ENCODE measurements at regions of chr3 and their contacts with region 1.

Region 1: GRCh38 chr3:19937459-19938294 is 3.7 kb upstream of the EFHB start:
- DNase-seq: peak; percentile 37
- ATAC-seq: peak; percentile 92
- H3K4me3 Mint-ChIP-seq: no peak overlapping the region
- H3K27ac Mint-ChIP-seq: peak overlapping the region; percentile 26
- H3K4me1 Mint-ChIP-seq: peaks cover 26% of the 10 kb centered on the region
- H3K27me3 Mint-ChIP-seq: peaks cover 11% of the 10 kb centered on the region
- CTCF ChIP-seq: no peak

Region 2: DNA sequence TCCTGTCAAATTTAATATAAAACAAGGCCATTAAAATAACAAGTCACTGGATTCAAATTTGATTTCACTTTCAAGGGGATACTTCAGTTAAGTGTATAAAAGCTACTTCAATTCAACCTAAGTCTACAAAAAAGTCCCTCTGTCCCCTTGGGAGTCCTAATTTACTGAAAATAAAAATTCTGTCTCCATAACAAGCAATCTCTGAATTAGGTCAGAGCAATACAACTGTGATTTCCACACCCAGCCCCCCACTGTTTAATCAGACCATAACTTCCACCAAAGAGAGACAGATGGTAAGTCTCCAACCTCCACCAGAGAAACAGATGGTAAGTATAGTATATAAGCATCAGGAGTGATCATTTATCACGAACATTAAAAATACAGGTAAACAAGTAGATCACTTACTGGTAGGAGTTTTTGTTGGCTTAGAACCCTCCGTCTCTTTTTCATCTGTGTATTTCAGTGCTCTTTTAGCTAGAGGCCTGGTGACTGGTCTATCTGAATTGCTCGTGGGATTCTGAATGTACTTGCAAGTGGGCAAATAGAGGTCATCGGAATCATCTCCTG is 236.2 kb after region 1 on chr3:
- CTCF ChIA-PET with region 1: no interaction called
- POLR2A ChIA-PET with region 1: no interaction called
- intact Hi-C with region 1: loop called (anchors 5 kb)
- DNase-seq: no peak
- ATAC-seq: no peak
- H3K4me3 Mint-ChIP-seq: no peak overlapping the region
- H3K27ac Mint-ChIP-seq: no peak overlapping the region
- H3K4me1 Mint-ChIP-seq: no peaks in the 10 kb centered on the region
- H3K27me3 Mint-ChIP-seq: no peaks in the 10 kb centered on the region
- CTCF ChIP-seq: no peak

Region 3: GRCh38 chr3:20256144-20256543 is 318.5 kb after region 1 on chr3:
- CTCF ChIA-PET with region 1: no interaction called
- POLR2A ChIA-PET with region 1: no interaction called
- intact Hi-C with region 1: no loop called
- DNase-seq: no peak
- ATAC-seq: no peak
- H3K4me3 Mint-ChIP-seq: no peak overlapping the region
- H3K27ac Mint-ChIP-seq: no peak overlapping the region
- H3K4me1 Mint-ChIP-seq: no peaks in the 10 kb centered on the region
- H3K27me3 Mint-ChIP-seq: no peaks in the 10 kb centered on the region
- CTCF ChIP-seq: no peak

Measured in activated CD8-positive, alpha-beta T cell treated with anti-CD3 and anti-CD28 coated beads for 36 hours (primary cell).